Astrocyte of the cerebellum (primary cell): ENCODE measurements at regions of chr2 and their contacts with region 1.

Region 1: DNA sequence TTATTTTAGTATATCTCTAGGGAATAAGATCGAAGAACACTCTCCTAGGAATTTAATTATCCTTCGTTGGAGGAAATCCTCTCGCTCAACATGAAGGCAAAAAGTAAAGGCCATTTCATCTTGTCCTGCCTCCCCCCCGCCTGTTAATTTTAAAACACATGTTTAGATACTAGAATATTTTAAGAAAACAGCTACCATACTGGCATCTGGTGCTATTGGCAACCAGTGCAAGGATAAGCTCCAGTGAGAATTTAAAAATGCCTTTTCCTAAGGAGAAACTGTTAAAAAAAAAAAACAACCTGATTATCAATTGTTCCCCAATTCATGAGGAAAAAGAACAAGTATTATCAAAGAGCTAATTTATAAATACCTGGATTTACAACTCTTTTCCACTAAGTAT is 864.7 kb downstream of the NRXN1 start:
- DNase-seq: no peak
- H3K4me3 ChIP-seq: no peak overlapping the region
- CTCF ChIP-seq: no peak

Region 2: DNA sequence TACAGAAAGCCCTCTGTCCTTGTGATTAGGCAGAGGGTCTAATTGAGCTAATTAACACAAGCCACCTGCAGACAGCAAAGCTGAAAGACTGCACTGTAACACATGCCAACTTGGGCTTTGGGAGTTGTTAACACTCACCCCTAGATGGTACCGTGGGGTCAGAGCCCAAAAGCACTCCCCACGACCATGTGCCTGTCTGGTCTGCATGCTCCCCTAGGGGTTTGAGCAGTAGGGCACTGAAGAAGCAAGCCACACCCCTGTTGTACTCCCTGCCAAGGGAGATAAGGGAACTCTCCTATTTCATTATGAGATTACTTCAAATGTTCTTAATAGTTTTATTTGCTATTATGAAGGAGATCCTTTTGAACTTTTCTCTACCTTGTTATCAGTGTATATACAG is 452.8 kb before region 1 on chr2:
- in situ Hi-C with region 1: loop called (anchors 25 kb)
- DNase-seq: no peak
- H3K4me3 ChIP-seq: no peak overlapping the region
- CTCF ChIP-seq: no peak

Region 3: DNA sequence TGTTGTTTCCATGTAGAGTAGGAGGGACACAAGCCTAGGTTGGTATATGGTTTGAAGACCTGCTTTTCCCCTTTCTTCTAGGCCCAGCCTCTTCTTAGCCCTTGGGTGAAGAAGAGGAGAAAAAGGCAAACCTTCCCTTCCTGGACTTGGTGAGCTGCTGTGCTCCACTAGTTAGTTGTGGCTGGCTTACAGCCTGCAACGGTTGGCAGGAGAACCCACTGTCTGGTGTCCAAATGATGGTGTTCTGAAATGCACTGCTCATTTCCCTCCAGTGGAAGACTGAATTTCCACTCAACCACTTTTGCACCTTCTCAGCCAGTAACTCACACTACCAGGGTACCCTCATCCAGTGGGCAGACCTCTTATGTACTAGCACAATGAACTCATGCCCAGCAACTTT is 40.6 kb after region 1 on chr2:
- in situ Hi-C with region 1: no loop called
- DNase-seq: no peak
- H3K4me3 ChIP-seq: no peak overlapping the region
- CTCF ChIP-seq: no peak